ENCODE measurements at regions of chr7 and their contacts with region 1.

Region 1: GRCh38 chr7:30983042-30983913 is 19.5 kb downstream of the GHRHR start:
- DNase-seq: peak; percentile 63
- H3K4me3 Mint-ChIP-seq: no peak overlapping the region
- H3K27ac Mint-ChIP-seq: no peak overlapping the region
- H3K4me1 Mint-ChIP-seq: peaks cover 18% of the 10 kb centered on the region
- H3K27me3 Mint-ChIP-seq: peaks cover 28% of the 10 kb centered on the region

Region 2: GRCh38 chr7:31043051-31043471 is 59.8 kb after region 1 on chr7:
- intact Hi-C with region 1: no loop called
- DNase-seq: no peak
- H3K4me3 Mint-ChIP-seq: no peak overlapping the region
- H3K27ac Mint-ChIP-seq: no peak overlapping the region
- H3K4me1 Mint-ChIP-seq: no peaks in the 10 kb centered on the region
- H3K27me3 Mint-ChIP-seq: peaks cover 7% of the 10 kb centered on the region

Region 3: DNA sequence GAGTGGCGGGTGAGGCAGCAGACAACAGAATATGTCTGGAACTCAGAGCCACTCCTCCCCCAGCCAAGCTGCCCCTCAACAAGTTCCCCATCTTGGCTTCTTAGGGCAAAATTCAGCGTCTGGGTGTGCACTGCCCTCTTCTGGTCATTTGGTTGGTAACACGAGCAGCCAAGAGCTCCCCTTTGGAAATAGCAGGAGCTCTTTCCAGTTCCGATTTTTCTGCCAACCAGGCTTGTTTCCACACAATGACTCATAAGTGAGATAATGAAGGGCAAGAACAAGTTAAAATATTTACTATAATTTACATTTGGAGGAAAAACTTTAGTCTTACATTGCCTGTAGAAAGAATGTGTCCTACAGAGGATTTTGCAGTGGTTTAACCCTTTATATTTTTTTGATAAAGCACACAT is 139.4 kb after region 1 on chr7:
- intact Hi-C with region 1: loop called (anchors 1 kb)
- DNase-seq: peak; percentile 13
- H3K4me3 Mint-ChIP-seq: no peak overlapping the region
- H3K27ac Mint-ChIP-seq: no peak overlapping the region
- H3K4me1 Mint-ChIP-seq: no peaks in the 10 kb centered on the region
- H3K27me3 Mint-ChIP-seq: peaks cover 5% of the 10 kb centered on the region